Activated T-helper 2 cell treated with anti-CD3 and anti-CD28 coated beads, Interferon-gamma antibody, Interleukin-2, Interleukin-4, amounts not matched to agents 10 μg/mL and 5 μg/mL and 100 μg/mL, durations not matched to agents 14 hours and 24 hours and 36 hours (primary cell): ENCODE measurements at regions of chr11 and their contacts with region 1.

Region 1: DNA sequence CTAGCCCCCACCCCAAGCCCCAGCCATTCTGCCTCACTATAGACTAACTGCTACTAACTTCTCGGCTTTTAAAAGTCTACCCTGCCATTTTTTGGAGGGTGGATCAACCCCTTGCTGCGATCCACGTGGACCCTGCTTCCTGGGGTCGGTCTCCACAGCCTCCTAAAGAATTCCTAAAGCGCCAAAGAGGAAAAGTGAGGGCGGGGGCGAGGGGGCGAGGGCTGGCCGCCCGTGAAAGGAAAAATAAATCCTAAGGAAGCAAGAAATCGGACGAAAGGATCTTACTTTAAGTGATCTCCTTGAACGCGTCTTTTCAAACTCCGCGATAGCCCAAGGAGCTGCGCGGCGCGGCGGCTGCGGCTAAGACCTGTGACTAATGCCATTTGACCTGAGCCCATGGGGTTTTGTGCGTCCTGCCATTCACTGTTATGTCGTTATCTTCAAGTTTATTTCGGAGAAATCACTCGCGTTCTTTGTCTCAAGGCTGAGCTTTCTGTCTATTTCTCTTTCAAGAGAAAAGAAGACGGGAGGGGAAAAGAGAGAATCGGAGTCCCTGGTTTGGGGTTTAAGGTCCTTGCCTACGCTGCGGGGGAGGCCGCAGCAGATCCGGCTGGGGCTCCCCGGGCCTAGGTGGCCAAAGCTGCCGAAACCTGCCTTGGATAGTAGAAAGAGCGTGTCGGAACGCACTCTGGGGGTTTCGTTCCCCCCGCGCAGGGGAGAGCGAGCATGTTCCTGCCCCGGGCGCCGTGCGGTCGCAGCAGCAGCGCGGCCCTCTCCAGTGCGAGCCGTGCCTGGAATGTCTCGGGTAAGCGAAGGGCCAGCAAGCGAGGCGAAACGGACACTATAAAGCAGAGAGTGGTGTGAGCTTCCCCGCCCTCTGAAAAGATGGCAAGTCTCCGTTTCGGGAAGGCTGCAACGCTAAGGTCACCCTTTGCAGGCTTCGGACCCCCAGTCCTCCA is 2.8 kb upstream of the DBX1 start:
- DNase-seq: no peak
- H3K4me3 Mint-ChIP-seq: peak overlapping the region; percentile 13
- H3K27ac Mint-ChIP-seq: peak overlapping the region; percentile 21
- H3K4me1 Mint-ChIP-seq: peaks cover 6% of the 10 kb centered on the region
- H3K27me3 Mint-ChIP-seq: peaks cover 73% of the 10 kb centered on the region

Region 2: DNA sequence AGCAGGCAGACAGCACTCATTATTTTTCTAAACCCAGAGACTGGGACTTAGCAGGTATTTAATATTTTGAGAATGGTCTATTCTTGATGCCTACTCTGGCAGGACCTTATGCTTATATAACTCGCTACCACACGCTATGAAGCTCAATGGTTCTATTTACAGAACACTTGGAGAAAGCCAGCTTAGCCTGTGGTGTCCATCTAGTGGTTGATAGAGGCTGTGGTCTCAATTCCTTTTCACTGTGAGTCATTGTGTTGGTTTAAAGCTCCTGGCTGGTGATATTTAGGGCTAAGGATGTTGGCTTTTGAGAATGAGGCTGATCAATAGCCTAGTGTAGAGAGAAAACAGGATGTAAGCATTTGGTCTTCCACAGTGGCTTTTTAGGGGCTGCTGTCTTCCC is 209.2 kb before region 1 on chr11:
- intact Hi-C with region 1: no loop called
- DNase-seq: no peak
- H3K4me3 Mint-ChIP-seq: no peak overlapping the region
- H3K27ac Mint-ChIP-seq: no peak overlapping the region
- H3K4me1 Mint-ChIP-seq: peaks cover 7% of the 10 kb centered on the region
- H3K27me3 Mint-ChIP-seq: peaks cover 17% of the 10 kb centered on the region

Region 3: DNA sequence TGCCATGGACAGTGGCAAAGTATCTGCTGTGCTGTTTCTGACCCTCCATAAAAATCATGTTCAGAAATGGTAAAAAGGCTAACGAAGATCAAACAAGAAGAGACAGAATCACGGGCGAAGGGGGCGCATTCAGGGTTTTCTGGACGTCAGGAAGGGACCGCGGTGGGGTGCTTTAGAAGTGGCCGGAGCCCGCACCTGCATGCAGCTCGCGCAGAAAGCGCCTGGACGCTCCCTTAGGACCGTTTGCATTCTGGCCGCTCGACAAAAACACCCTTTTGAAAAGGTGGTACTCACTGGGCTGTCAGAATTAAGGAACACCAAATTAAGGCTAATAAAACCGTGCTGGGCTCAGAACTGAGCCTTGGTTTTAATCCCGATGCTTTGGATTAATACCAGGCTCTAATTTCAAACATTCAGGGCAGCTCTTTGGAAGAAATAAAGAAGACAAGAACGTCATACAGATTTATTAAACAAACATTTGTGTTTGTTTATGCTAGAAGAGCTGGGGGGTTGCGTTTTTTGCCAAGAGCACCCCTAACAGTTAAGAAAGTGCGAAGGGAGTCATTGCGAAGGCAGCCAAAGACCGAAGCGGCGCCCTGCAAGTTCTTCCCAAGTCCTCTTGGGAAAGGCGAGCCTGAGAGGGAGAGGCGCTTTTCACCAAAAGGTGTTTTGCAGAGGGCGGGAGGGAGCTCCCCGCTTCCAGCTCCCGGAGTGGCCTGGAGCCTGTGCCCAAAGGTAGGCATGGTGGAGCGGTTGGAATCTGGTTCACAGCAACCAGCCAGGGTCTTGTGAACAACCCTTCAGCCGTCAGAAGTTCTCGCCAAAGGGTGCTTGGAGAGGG is 44.9 kb after region 1 on chr11:
- intact Hi-C with region 1: loop called (anchors 5 kb)
- DNase-seq: no peak
- H3K4me3 Mint-ChIP-seq: no peak overlapping the region
- H3K27ac Mint-ChIP-seq: no peak overlapping the region
- H3K4me1 Mint-ChIP-seq: no peaks in the 10 kb centered on the region
- H3K27me3 Mint-ChIP-seq: peaks cover 48% of the 10 kb centered on the region

Region 4: DNA sequence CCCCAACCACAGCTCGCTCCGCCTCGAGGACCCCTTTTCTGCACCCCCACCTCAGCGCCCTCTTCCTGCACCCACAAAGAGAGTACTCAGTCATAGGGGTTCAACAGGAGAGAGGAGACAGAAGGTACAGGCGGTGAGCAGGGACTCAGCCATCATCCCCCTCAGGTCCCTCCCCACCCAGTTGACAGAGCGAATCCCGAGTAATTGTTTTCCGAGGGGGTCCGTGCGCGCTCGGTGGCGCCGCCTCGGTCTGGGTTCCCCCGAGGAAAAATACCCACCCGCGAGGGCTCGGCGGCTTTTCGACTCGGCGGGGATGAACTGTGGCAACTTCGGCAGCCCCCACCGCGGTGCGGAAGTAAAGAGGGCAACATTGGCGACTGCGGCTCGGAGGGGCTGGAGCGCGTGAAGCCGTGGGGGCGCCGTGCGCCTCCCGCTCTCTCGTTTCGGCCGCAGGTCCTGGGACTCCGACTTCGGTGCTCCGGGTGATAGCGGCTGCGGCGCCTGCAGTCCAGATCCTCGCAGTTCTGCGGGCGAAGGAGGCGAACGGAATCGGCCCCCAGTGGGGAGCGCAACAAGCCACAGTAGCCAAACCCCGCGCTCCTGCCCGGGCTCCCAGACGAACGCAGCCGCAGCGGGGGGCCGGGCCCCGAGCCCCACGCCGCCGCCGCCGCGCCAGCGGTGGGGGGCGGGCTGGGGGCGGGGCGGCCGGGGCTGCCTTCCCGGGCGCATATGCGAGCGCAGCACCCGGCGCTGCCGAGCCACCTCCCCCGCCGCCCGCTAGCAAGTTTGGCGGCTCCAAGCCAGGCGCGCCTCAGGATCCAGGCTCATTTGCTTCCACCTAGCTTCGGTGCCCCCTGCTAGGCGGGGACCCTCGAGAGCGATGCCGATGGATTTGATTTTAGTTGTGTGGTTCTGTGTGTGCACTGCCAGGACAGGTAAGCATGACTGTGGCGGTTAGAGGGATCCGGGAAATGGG is 506.0 kb after region 1 on chr11 and contains the start of gene NELL1:
- intact Hi-C with region 1: loop called (anchors 2 kb)
- DNase-seq: no peak
- H3K4me3 Mint-ChIP-seq: no peak within 1 kb of the TSS
- H3K27ac Mint-ChIP-seq: no peak within 1 kb of the TSS
- H3K4me1 Mint-ChIP-seq: no peaks in the 10 kb centered on the region
- H3K27me3 Mint-ChIP-seq: peaks cover 62% of the 10 kb centered on the region
- total RNA-seq, gene NELL1: 0.07 TPM in 1 of 2 replicates, not detected in the other